ENCODE measurements at regions of chr17 and their contacts with region 1.

Region 1: DNA sequence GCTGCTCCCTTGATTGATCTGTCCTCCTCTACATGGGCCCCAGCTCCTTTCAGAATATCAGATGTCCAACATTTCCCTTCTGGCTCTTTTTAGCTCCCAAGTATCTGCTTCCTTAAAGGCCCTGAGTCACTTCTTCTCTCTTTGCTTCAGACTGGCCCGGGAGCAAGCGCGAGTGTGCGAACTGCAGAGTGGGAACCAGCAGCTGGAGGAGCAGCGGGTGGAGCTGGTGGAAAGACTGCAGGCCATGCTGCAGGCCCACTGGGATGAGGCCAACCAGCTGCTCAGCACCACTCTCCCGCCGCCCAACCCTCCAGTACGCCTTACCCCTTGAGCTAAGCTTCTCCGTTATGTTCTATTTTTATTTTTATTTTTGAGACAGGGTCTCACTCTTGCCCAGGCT is 12.3 kb downstream of the CNTROB start:
- DNase-seq: no peak
- H3K4me3 ChIP-seq: no peak overlapping the region
- H3K27ac ChIP-seq: no peak overlapping the region
- H3K4me1 ChIP-seq: no peaks in the 10 kb centered on the region
- H3K27me3 ChIP-seq: no peaks in the 10 kb centered on the region
- CTCF ChIP-seq: no peak
- EP300 ChIP-seq: no peak
- POLR2A ChIP-seq: no peak
- RAD21 ChIP-seq: no peak

Region 2: GRCh38 chr17:7931709-7932482 is 12.4 kb before region 1 on chr17 and contains the starts of genes CNTROB and TRAPPC1:
- CTCF ChIA-PET with region 1: interaction called, 8 read pairs
- POLR2A ChIA-PET with region 1: interaction called, 11 read pairs
- DNase-seq: peak; percentile 90 to 98
- H3K4me3 ChIP-seq: peak within 1 kb of the TSS; percentile 80 to 95 (median 89)
- H3K27ac ChIP-seq: peak within 1 kb of the TSS; percentile 16; the same call in 1 of the 2 replicates
- H3K4me1 ChIP-seq: peaks cover 0 to 5% (median 3%) of the 10 kb centered on the region in 4 experiments; a peak in 4 of 7 replicates
- H3K27me3 ChIP-seq: peaks cover 11 to 28% (median 25%) of the 10 kb centered on the region in 4 experiments
- CTCF ChIP-seq: peak in 1 of 3 experiments; percentile 6; a peak in 1 of 4 replicates
- EP300 ChIP-seq: no peak
- POLR2A ChIP-seq: no peak
- RAD21 ChIP-seq: no peak
- total RNA-seq, gene CNTROB: 30.0 and 31.9 TPM in 2 replicates
- total RNA-seq, gene TRAPPC1: 99.3 and 114 TPM in 2 replicates